Activated naive CD4-positive, alpha-beta T cell treated with anti-CD3 and anti-CD28 coated beads for 36 hours (primary cell): ENCODE measurements at regions of chr4 and their contacts with region 1.

Region 1: GRCh38 chr4:108355186-108355901 is 186.6 kb upstream of the LEF1 start:
- DNase-seq: peak; percentile 76
- H3K4me3 Mint-ChIP-seq: peak overlapping the region; percentile 62
- H3K27ac Mint-ChIP-seq: peak overlapping the region; percentile 88
- H3K4me1 Mint-ChIP-seq: peaks cover 61% of the 10 kb centered on the region
- H3K27me3 Mint-ChIP-seq: no peaks in the 10 kb centered on the region

Region 2: GRCh38 chr4:108166441-108167315 is 188.7 kb before region 1 on chr4:
- CTCF ChIA-PET with region 1: interaction called, 3 read pairs
- intact Hi-C with region 1: loop called (anchors 1 kb)
- DNase-seq: peak; percentile 75
- H3K4me3 Mint-ChIP-seq: peak overlapping the region; percentile 88
- H3K27ac Mint-ChIP-seq: peak overlapping the region; percentile 97
- H3K4me1 Mint-ChIP-seq: peaks cover 34% of the 10 kb centered on the region
- H3K27me3 Mint-ChIP-seq: no peaks in the 10 kb centered on the region

Region 3: GRCh38 chr4:108313546-108314339 is 41.6 kb before region 1 on chr4:
- CTCF ChIA-PET with region 1: no interaction called
- intact Hi-C with region 1: loop called (anchors 1 kb)
- DNase-seq: peak; percentile 49
- H3K4me3 Mint-ChIP-seq: no peak overlapping the region
- H3K27ac Mint-ChIP-seq: no peak overlapping the region
- H3K4me1 Mint-ChIP-seq: peaks cover 44% of the 10 kb centered on the region
- H3K27me3 Mint-ChIP-seq: peaks cover 1% of the 10 kb centered on the region

Region 4: GRCh38 chr4:108370291-108371141 is 15.2 kb after region 1 on chr4:
- CTCF ChIA-PET with region 1: interaction called, 12 read pairs
- intact Hi-C with region 1: no loop called
- DNase-seq: peak; percentile 47
- H3K4me3 Mint-ChIP-seq: peak overlapping the region; percentile 78
- H3K27ac Mint-ChIP-seq: peak overlapping the region; percentile 57
- H3K4me1 Mint-ChIP-seq: peaks cover 53% of the 10 kb centered on the region
- H3K27me3 Mint-ChIP-seq: no peaks in the 10 kb centered on the region

Region 5: DNA sequence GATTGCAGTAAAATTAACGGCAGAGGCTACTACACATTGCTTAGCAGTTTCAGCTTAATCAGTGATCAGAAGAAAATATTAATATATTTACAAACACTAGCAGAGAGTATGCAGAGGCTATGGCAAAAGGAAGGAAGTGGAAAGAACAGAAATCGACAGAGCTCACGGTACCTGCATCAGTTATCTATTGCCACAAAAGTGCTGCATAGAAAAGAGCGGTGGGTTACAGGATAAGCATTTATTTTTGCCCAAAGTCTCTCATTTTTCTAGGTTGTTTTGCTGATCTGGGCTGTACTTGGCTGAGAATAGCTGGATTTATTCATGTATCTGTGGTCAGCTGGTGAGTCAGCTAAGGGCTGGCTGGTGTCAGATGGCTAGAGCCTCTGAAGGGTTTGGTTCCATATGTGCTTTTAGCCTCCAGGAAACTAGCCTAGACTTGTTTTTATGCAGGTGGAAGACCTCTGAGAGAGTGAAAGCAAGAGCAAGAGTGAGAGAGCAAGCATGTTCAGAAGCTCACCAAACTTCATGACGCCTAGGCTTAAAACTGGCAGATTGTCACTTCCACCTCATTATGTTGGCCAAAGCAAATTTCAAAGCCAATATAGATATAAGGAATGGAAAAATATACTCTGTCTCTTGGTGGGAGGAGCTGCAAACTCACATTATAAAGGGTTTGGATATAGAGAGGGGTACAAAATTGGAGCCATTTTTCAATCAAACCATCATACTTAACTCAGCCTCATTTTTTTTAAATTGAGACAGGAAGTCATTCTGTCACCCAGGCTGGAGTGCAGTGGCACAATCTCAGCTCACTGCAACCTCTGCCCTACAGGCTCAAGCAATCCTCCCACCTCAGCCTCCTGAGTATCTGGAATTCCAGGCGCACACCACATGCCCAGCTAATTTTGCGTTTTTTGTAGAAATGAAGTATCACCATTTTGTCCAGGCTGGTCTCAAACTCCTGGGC is 111.9 kb after region 1 on chr4:
- CTCF ChIA-PET with region 1: no interaction called
- intact Hi-C with region 1: loop called (anchors 2 kb)
- DNase-seq: peak; percentile 48
- H3K4me3 Mint-ChIP-seq: peak overlapping the region; percentile 65
- H3K27ac Mint-ChIP-seq: peak overlapping the region; percentile 88
- H3K4me1 Mint-ChIP-seq: peaks cover 40% of the 10 kb centered on the region
- H3K27me3 Mint-ChIP-seq: no peaks in the 10 kb centered on the region